CD4-positive, alpha-beta memory T cell (primary cell): ENCODE measurements at regions of chr22 and their contacts with region 1.

Region 1: DNA sequence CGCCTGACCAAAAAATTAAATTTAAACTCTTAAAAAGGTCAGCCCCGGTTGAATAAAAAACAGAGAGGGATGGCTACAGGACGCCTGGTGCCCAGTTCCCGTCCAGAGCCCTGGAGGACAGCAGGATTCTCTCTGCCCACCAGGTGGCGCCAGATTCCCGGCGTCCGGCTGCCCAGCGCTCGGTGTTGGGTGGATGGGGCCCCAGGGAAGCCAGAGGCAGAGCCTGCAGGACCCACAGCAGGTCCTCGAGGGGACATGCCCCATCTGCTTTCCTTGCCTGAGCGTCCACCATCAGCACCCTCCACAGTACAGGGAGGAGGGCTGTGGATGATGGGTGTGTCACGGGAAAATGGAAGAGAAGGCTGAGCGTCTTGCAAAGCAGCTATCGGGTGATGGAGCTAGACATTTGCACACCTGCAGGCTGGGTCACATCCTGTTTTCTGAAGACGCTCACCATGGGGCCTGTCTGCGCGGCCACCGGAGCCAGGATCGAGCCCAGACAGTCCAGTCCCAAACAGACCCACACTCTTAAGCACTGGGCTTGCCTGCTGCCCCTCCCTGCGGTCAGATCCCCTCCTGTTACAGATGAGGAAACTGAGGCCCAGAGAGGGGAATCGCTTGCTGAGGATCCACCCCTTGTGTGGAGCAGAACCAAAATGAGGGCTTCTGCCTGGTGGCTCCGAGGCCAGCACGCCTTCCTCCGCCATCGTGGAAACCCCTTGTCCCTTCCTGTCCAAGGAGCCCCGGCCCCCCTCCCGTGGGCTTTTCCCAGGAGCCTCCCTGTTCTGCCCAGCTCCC is 18.5 kb upstream of the CBX7 start:
- DNase-seq: peak; percentile 81 to 89 (median 83)
- H3K4me3 ChIP-seq: peak overlapping the region; percentile 49 to 63
- H3K4me3 Mint-ChIP-seq: peak overlapping the region; percentile 51 to 79 (median 68)
- H3K27ac ChIP-seq: peak overlapping the region; percentile 40
- H3K27ac Mint-ChIP-seq: peak overlapping the region; percentile 89 to 95 (median 92)
- H3K4me1 ChIP-seq: peaks cover 52% of the 10 kb centered on the region
- H3K4me1 Mint-ChIP-seq: peaks cover 28 to 49% (median 40%) of the 10 kb centered on the region in 4 donors
- H3K27me3 ChIP-seq: no peaks in the 10 kb centered on the region
- H3K27me3 Mint-ChIP-seq: peaks cover 0 to 2% of the 10 kb centered on the region in 2 donors

Region 2: DNA sequence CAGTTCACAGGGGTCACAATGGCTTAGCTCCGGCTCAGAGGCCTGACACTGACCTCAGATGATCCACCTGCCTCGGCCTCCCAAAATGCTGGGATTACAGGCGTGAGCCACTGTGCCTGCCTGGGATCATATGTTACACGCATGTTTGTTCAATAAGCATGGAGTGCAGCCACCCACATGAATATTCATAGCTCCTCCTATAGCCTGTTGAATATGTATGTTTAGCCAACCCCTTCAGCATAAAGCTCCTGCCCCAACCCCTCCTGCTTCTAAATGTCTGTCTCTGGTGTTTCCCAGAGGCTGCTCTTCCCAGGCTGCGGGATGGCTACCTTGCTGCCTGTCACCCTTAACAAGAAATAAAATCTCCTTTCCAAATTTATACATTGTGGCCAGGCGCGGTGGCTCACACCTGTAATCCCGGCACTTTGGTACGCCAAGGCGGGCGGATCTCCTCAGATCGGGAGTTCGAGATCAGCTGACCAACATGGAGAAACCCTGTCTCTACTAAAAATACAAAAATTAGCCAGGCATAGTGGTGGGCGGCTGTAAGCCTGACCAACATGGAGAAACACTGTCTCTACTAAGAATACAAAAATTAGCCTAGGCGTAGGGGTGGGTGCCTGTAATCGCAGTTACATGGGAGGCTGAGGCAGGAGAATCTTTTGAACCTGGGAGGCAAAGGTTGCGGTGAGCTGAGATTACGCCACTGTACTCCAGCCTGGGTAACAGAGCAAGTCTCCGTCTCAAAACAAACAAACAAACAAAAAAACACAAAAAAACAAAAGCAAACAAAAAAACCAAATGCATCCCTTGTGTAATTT is 131.5 kb before region 1 on chr22:
- CTCF ChIA-PET with region 1: no interaction called
- POLR2A ChIA-PET with region 1: no interaction called
- intact Hi-C with region 1: no loop called
- DNase-seq: no peak
- H3K4me3 ChIP-seq: no peak overlapping the region
- H3K4me3 Mint-ChIP-seq: peak overlapping the region; percentile 74 to 89 (median 78)
- H3K27ac ChIP-seq: peak overlapping the region; percentile 43
- H3K27ac Mint-ChIP-seq: peak overlapping the region; percentile 77 to 93 (median 89)
- H3K4me1 ChIP-seq: peaks cover 27% of the 10 kb centered on the region
- H3K4me1 Mint-ChIP-seq: peaks cover 21 to 62% (median 39%) of the 10 kb centered on the region in 4 donors
- H3K27me3 ChIP-seq: no peaks in the 10 kb centered on the region
- H3K27me3 Mint-ChIP-seq: no peaks in the 10 kb centered on the region

Region 3: GRCh38 chr22:39152511-39153219 is 18.4 kb before region 1 on chr22 and contains the start of gene CBX7:
- CTCF ChIA-PET with region 1: interaction called, 10 read pairs
- POLR2A ChIA-PET with region 1: interaction called, 12 read pairs
- intact Hi-C with region 1: no loop called
- DNase-seq: peak; percentile 90 to 96 (median 94)
- H3K4me3 ChIP-seq: peak within 1 kb of the TSS; percentile 55 to 79
- H3K4me3 Mint-ChIP-seq: peak within 1 kb of the TSS; percentile 84 to 91 (median 88)
- H3K27ac ChIP-seq: peak within 1 kb of the TSS; percentile 78
- H3K27ac Mint-ChIP-seq: peak within 1 kb of the TSS; percentile 88 to 99 (median 93)
- H3K4me1 ChIP-seq: peaks cover 51% of the 10 kb centered on the region
- H3K4me1 Mint-ChIP-seq: peaks cover 22 to 48% (median 35%) of the 10 kb centered on the region in 4 donors
- H3K27me3 ChIP-seq: peaks cover 7% of the 10 kb centered on the region
- H3K27me3 Mint-ChIP-seq: peaks cover 0 to 3% of the 10 kb centered on the region in 2 donors
- total RNA-seq, gene CBX7: 181 to 198 TPM

Region 4: DNA sequence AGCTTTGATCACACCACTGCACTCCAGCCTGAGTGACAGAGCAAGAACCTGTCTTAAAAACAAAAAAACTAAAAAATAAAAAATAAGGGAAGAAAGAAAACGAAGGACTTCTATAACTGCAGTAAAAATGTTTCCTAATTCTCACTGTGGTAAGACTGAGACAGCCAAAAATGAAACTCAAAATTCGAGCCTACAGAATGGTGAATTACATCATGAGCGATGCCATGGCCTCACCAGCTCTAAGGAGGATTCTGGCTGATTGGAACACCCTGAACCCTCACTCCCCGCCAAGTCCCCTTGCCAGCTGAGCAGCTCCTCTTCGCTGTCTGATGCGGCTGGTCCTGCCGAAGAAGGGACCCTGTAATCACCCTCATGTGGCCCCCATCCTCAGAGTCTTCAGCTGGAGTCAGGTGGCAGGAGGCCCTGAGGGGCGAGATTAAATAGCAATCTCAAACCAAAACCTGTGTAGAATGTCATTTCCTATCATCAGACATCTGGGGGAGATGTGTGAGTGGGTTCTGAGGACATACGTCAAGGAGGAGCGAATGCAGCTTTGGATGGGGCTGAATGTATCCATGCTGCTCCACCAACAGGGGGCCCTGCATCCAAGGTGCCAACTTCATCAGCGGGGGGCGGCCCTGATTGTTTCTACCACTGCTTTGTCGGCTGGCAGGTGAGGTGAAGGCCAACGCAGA is 44.5 kb after region 1 on chr22:
- CTCF ChIA-PET with region 1: interaction called, 15 read pairs
- POLR2A ChIA-PET with region 1: interaction called, 7 read pairs
- intact Hi-C with region 1: loop called (anchors 5 kb)
- DNase-seq: peak; percentile 22 to 57 (median 32)
- H3K4me3 ChIP-seq: no peak overlapping the region
- H3K4me3 Mint-ChIP-seq: no peak overlapping the region
- H3K27ac ChIP-seq: no peak overlapping the region
- H3K27ac Mint-ChIP-seq: peak overlapping the region in 2 of 7 donors; percentile 12 to 21
- H3K4me1 ChIP-seq: no peaks in the 10 kb centered on the region
- H3K4me1 Mint-ChIP-seq: peaks cover 0 to 9% (median 5%) of the 10 kb centered on the region in 4 donors
- H3K27me3 ChIP-seq: no peaks in the 10 kb centered on the region
- H3K27me3 Mint-ChIP-seq: peaks cover 4 to 12% of the 10 kb centered on the region in 2 donors

Region 5: DNA sequence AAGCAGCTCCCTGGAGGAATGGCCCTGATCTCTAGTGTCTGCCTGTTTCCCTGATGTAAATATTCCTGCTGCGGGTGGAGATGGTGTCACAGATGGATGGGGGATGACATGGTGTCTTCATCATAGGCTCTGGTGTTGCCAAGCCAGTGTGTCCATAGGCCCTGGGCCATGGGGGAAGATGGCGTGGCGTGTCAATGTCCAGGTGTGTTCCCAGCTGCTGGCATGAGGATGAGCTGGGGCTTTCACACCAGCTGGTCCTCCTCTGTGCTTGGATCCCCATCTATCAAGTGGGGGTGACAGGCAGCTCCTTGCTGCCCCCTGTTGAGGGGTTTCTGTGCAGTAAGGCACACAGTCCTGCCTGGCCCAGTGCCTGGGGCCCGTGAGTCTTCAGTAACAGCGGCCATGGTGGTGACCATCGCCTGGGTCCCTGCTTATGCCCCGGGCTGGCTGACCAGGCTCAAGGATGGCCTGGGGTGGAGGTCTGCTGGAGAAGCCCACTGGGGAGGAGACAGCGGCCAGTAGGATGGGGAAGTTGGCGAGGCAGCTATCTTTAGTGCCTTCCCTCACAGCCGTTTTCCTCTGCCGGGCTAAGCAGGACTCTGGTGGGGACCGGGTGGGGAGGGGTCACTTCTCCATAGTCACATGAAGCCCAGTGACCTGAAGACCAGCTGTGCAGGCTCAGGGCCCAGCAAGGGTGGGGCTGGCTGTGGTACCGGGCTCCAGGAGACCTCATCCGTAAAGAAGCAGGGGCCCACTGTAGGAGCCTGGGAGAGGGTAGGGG is 135.7 kb after region 1 on chr22:
- CTCF ChIA-PET with region 1: interaction called, 477 read pairs
- POLR2A ChIA-PET with region 1: interaction called, 433 read pairs
- intact Hi-C with region 1: loop called (anchors 1 kb)
- DNase-seq: peak in 4 of 5 donors; percentile 32 to 45 (median 42)
- H3K4me3 ChIP-seq: no peak overlapping the region
- H3K4me3 Mint-ChIP-seq: no peak overlapping the region
- H3K27ac ChIP-seq: no peak overlapping the region
- H3K27ac Mint-ChIP-seq: peak overlapping the region in 1 of 7 donors; percentile 16
- H3K4me1 ChIP-seq: peaks cover 12% of the 10 kb centered on the region
- H3K4me1 Mint-ChIP-seq: peaks cover 5 to 30% (median 12%) of the 10 kb centered on the region in 4 donors
- H3K27me3 ChIP-seq: no peaks in the 10 kb centered on the region
- H3K27me3 Mint-ChIP-seq: peaks cover 0 to 2% of the 10 kb centered on the region in 2 donors

Region 6: GRCh38 chr22:39332441-39333064 is 161.5 kb after region 1 on chr22:
- CTCF ChIA-PET with region 1: interaction called, 10 read pairs
- POLR2A ChIA-PET with region 1: no interaction called
- intact Hi-C with region 1: no loop called
- DNase-seq: no peak
- H3K4me3 ChIP-seq: no peak overlapping the region
- H3K4me3 Mint-ChIP-seq: no peak overlapping the region
- H3K27ac ChIP-seq: no peak overlapping the region
- H3K27ac Mint-ChIP-seq: peak overlapping the region in 3 of 7 donors; percentile 23 to 64 (median 36)
- H3K4me1 ChIP-seq: no peaks in the 10 kb centered on the region
- H3K4me1 Mint-ChIP-seq: peaks cover 0 to 17% (median 4%) of the 10 kb centered on the region in 4 donors
- H3K27me3 ChIP-seq: no peaks in the 10 kb centered on the region
- H3K27me3 Mint-ChIP-seq: peaks cover 0 to 1% of the 10 kb centered on the region in 2 donors